CD4-positive, alpha-beta T cell (primary cell): ENCODE measurements at regions of chr3 and their contacts with region 1.

Region 1: DNA sequence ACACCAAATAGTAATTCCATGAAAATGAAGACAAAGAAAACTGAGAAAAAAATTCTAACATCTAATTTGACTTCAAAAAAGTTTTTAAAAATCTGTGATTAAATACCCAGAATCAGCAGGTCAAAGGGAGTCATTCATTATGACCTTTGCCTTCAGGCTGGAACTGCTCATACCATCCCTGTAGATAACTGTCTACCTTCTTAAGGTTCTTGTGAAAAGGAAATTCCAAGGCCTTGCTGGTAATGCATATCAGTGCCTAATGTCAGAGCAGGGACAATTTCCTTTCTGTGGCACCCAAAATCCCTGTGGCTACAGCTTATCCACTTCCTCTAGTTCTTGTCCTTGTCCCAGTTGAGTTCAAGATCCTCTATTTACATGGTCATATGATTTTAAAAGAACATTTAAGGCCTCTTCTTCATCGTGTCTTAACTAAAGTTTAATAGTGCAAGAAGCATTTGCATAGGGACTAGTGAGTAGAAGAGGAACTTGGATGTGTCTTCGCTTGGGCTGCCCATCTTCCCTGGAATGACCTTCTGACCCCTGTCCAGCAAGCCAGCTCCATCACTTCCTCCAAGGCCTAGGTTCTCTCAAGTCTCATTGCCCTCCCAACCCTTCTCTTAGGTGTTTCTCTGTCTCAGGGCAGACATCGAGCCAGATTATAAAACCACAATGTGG is 8.7 kb upstream of the PLCL2 start:
- DNase-seq: no peak
- ATAC-seq: no peak
- H3K4me3 ChIP-seq: no peak overlapping the region
- H3K4me3 Mint-ChIP-seq: no peak overlapping the region
- H3K27ac ChIP-seq: no peak overlapping the region
- H3K27ac Mint-ChIP-seq: no peak overlapping the region
- H3K4me1 ChIP-seq: no peaks in the 10 kb centered on the region
- H3K4me1 Mint-ChIP-seq: no peaks in the 10 kb centered on the region
- H3K27me3 ChIP-seq: no peaks in the 10 kb centered on the region
- H3K27me3 Mint-ChIP-seq: peaks cover 7% of the 10 kb centered on the region
- CTCF ChIP-seq: no peak

Region 2: DNA sequence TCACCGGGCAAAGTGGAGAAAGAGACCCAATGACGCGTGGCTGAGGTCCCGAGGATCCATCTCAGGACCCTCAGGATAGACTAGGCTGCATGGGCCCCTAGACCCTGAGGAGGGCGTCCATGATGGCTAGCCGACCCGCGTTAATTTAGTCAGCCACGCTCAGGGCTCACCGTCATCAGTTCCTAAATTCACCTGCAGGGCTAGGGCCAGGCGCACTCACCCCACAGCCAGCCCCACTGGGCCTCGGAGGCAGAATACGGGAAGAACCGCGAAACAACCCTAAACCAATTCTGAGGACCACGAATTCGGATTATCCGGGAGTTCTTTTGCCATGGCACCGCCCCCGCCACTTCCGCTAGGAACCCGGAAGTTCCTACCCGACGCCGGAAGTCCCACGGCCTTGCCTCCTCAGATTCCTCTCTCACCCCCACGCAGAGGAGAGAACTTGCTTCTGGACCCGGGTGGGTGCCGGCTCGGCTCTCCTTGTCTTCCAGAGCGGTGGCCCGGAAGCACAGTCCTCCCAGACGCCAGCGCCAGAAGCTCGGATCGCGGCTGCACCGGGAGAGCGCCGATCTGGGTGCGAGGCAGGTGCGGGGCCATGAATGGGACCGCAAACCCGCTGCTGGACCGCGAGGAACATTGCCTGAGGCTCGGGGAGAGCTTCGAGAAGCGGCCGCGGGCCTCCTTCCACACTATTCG is 1448.7 kb before region 1 on chr3 and contains the starts of genes EAF1 and METTL6:
- CTCF ChIA-PET with region 1: no interaction called
- POLR2A ChIA-PET with region 1: no interaction called
- intact Hi-C with region 1: no loop called
- DNase-seq: peak; percentile 71 to 91 (median 80)
- ATAC-seq: peak; percentile 84
- H3K4me3 ChIP-seq: peak within 1 kb of the TSS; percentile 72
- H3K4me3 Mint-ChIP-seq: peak within 1 kb of the TSS; percentile 93
- H3K27ac ChIP-seq: peak within 1 kb of the TSS; percentile 58 to 80
- H3K27ac Mint-ChIP-seq: peak within 1 kb of the TSS; percentile 81
- H3K4me1 ChIP-seq: peaks cover 33% of the 10 kb centered on the region
- H3K4me1 Mint-ChIP-seq: peaks cover 74% of the 10 kb centered on the region
- H3K27me3 ChIP-seq: no peaks in the 10 kb centered on the region
- H3K27me3 Mint-ChIP-seq: no peaks in the 10 kb centered on the region
- CTCF ChIP-seq: peak; percentile 19
- total RNA-seq, gene EAF1: 31.7 to 34.9 TPM
- total RNA-seq, gene METTL6: 4.7 to 5.7 TPM

Region 3: GRCh38 chr3:16441371-16441875 is 434.6 kb before region 1 on chr3:
- CTCF ChIA-PET with region 1: no interaction called
- POLR2A ChIA-PET with region 1: no interaction called
- intact Hi-C with region 1: no loop called
- DNase-seq: no peak
- ATAC-seq: no peak
- H3K4me3 ChIP-seq: no peak overlapping the region
- H3K4me3 Mint-ChIP-seq: no peak overlapping the region
- H3K27ac ChIP-seq: no peak overlapping the region
- H3K27ac Mint-ChIP-seq: no peak overlapping the region
- H3K4me1 ChIP-seq: no peaks in the 10 kb centered on the region
- H3K4me1 Mint-ChIP-seq: peaks cover 39% of the 10 kb centered on the region
- H3K27me3 ChIP-seq: no peaks in the 10 kb centered on the region
- H3K27me3 Mint-ChIP-seq: no peaks in the 10 kb centered on the region
- CTCF ChIP-seq: no peak

Region 4: GRCh38 chr3:16860234-16860633 is 15.8 kb before region 1 on chr3:
- CTCF ChIA-PET with region 1: no interaction called
- POLR2A ChIA-PET with region 1: interaction called, 3 read pairs
- intact Hi-C with region 1: loop called in 1 of 2 experiments (anchors 2 kb)
- DNase-seq: no peak
- ATAC-seq: no peak
- H3K4me3 ChIP-seq: no peak overlapping the region
- H3K4me3 Mint-ChIP-seq: no peak overlapping the region
- H3K27ac ChIP-seq: no peak overlapping the region
- H3K27ac Mint-ChIP-seq: no peak overlapping the region
- H3K4me1 ChIP-seq: no peaks in the 10 kb centered on the region
- H3K4me1 Mint-ChIP-seq: no peaks in the 10 kb centered on the region
- H3K27me3 ChIP-seq: no peaks in the 10 kb centered on the region
- H3K27me3 Mint-ChIP-seq: no peaks in the 10 kb centered on the region
- CTCF ChIP-seq: no peak